ENCODE measurements at regions of chr20 and their contacts with region 1.

Region 1: GRCh38 chr20:5529331-5530148 is 212.8 kb upstream of the PROKR2 start:
- DNase-seq: peak; percentile 92
- H3K4me3 ChIP-seq: peak overlapping the region in 1 of 4 donors; percentile 28
- H3K27ac ChIP-seq: peak overlapping the region in 3 of 4 donors; percentile 5 to 75 (median 47)
- H3K4me1 ChIP-seq: peaks cover 0 to 22% (median 11%) of the 10 kb centered on the region in 4 donors
- H3K27me3 ChIP-seq: no peaks in the 10 kb centered on the region
- CTCF ChIP-seq: peak; percentile 69 to 80 (median 73)
- EP300 ChIP-seq: no peak
- POLR2A ChIP-seq: no peak

Region 2: GRCh38 chr20:4985658-4986057 is 543.9 kb before region 1 on chr20:
- in situ Hi-C with region 1: no loop called
- intact Hi-C with region 1: no loop called
- DNase-seq: no peak
- H3K4me3 ChIP-seq: no peak overlapping the region
- H3K27ac ChIP-seq: no peak overlapping the region
- H3K4me1 ChIP-seq: peaks cover 0 to 3% (median 0%) of the 10 kb centered on the region in 4 donors
- H3K27me3 ChIP-seq: no peaks in the 10 kb centered on the region
- CTCF ChIP-seq: no peak
- EP300 ChIP-seq: no peak
- POLR2A ChIP-seq: no peak

Region 3: DNA sequence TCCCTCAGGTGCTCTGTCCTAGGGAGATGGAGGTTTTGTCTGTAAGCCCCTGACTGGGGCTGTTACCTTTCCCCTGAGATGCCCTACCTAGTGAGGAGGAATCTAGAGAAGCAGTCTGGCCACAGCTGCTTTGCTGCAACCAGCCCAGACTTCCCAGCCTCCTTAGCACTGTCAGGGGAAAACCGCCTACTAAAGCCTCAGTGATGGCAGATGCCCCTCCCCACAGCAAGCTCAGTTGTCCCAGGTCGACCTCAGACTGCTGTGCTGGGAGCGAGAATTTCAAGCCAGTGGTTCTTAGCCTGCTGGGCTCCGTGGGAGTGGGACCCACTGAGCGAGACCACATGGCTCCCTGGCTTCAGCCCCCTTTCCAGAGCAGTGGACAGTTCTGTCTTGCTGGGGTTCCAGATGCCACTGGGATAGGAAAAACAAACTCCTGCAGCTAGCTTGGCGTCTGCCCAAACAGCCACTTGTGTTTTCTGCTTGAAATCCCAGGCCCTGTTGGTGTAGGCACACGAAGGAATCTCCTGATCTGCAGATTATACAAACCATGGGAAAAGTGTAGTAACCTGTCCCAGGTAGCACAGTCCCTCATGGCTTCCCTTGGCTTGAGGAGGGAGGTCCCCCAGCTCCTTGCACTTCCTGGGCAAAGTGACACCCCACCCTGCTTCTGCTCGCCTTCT is 66.4 kb before region 1 on chr20:
- in situ Hi-C with region 1: no loop called
- intact Hi-C with region 1: no loop called
- DNase-seq: no peak
- H3K4me3 ChIP-seq: no peak overlapping the region
- H3K27ac ChIP-seq: no peak overlapping the region
- H3K4me1 ChIP-seq: no peaks in the 10 kb centered on the region
- H3K27me3 ChIP-seq: no peaks in the 10 kb centered on the region
- CTCF ChIP-seq: no peak
- EP300 ChIP-seq: no peak
- POLR2A ChIP-seq: no peak

Region 4: DNA sequence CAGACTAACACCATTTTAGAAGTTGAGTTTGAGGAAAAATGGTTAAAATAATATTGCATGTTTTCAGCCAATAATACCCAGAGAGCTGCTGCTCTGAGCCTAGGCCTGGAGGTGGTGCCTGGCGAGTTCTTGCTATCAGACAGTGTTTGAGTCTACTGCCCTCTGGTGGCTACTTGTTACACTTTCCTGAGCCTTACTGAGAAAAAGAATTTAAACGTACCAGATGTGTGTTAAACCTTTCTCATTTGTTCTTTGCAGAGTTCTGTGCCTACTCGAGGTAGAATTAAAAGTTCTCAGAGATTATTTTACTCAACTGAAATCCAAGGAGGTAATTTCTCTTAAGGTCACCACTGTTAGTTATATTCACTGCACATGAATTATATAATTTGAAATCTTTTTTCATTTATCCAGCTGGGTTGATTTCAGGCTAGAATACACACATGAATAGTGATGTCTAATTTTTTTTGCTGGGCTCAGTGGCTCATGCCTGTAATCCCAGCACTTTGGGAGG is 258.9 kb after region 1 on chr20:
- in situ Hi-C with region 1: loop called in 1 of 4 experiments (anchors 10 kb)
- intact Hi-C with region 1: loop called (anchors 2 kb)
- DNase-seq: peak; percentile 80
- H3K4me3 ChIP-seq: no peak overlapping the region
- H3K27ac ChIP-seq: no peak overlapping the region
- H3K4me1 ChIP-seq: peaks cover 0 to 24% (median 5%) of the 10 kb centered on the region in 4 donors
- H3K27me3 ChIP-seq: no peaks in the 10 kb centered on the region
- CTCF ChIP-seq: peak; percentile 85 to 92 (median 90)
- EP300 ChIP-seq: no peak
- POLR2A ChIP-seq: no peak

Region 5: DNA sequence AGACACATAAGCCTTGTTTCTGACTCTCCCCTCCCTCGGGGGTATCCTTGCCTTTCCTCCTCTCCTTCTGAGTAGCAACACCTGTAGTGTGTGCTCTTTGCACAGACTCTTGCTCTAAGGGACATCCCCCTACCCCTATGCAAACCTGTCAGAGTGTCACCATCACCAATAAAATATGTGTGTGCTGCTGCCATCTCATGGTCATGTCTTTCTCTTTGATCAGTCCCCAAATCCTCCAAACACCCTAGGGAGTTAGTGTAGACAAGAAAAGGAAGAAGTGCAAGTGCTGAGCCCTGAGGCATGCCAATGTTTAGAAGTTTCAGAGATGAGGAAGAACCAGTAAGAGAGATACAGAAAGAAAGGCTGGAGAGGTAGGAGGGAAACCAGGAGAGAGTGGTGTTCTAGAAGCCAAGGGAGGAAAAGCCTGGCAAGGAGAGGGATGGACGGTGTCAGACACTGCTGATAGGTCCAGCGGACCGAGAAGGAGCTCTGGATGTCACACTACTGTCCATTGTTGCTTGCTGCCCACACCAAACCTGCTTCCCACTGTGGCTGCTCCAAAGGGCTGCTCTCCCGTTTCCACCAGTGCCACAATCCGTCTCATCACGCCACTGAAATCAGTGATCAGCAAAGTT is 404.4 kb after region 1 on chr20:
- in situ Hi-C with region 1: loop called in 1 of 4 experiments (anchors 25 kb)
- intact Hi-C with region 1: no loop called
- DNase-seq: no peak
- H3K4me3 ChIP-seq: no peak overlapping the region
- H3K27ac ChIP-seq: no peak overlapping the region
- H3K4me1 ChIP-seq: no peaks in the 10 kb centered on the region
- H3K27me3 ChIP-seq: peaks cover 4% of the 10 kb centered on the region
- CTCF ChIP-seq: peak in 2 of 5 experiments; percentile 5 to 10
- EP300 ChIP-seq: no peak
- POLR2A ChIP-seq: no peak

Region 6: GRCh38 chr20:6074145-6074561 is 544.6 kb after region 1 on chr20:
- in situ Hi-C with region 1: loop called in 2 of 4 experiments (anchors 5 kb)
- intact Hi-C with region 1: loop called (anchors 5 kb)
- DNase-seq: no peak
- H3K4me3 ChIP-seq: no peak overlapping the region
- H3K27ac ChIP-seq: no peak overlapping the region
- H3K4me1 ChIP-seq: no peaks in the 10 kb centered on the region
- H3K27me3 ChIP-seq: no peaks in the 10 kb centered on the region
- CTCF ChIP-seq: peak in 2 of 5 experiments; percentile 7 to 23
- EP300 ChIP-seq: no peak
- POLR2A ChIP-seq: no peak

Region 7: DNA sequence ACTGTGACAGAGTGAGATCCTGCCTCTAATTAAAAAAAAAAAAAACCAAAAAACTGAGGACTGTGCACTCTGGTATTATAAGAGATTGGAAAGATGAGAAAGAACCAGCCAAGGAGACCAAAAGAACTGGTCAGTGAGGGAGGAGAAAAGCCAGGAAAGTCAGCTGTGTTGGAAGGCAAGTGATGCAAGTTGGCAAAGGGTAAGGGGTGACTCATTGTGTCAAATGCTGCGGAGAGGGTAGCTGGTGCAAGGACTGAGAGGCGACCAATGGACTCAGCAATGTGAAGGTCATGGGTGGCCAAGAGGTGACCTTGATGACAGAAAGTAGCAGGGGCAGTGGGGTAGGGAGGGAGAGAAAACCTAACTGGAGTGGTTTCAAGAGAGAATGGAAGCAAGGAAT is 551.7 kb after region 1 on chr20:
- in situ Hi-C with region 1: loop called (anchors 5 to 10 kb)
- intact Hi-C with region 1: loop called (anchors 5 kb)
- DNase-seq: no peak
- H3K4me3 ChIP-seq: no peak overlapping the region
- H3K27ac ChIP-seq: no peak overlapping the region
- H3K4me1 ChIP-seq: no peaks in the 10 kb centered on the region
- H3K27me3 ChIP-seq: no peaks in the 10 kb centered on the region
- CTCF ChIP-seq: no peak
- EP300 ChIP-seq: no peak
- POLR2A ChIP-seq: no peak